ENCODE measurements at regions of chr9 and their contacts with region 1.

Region 1: GRCh38 chr9:92634712-92635605 is 35.0 kb downstream of the IPPK start:
- DNase-seq: peak; percentile 78 to 93 (median 92)
- ATAC-seq: peak; percentile 84 to 86
- H3K4me3 ChIP-seq: no peak overlapping the region
- H3K27ac ChIP-seq: no peak overlapping the region
- H3K4me1 ChIP-seq: no peaks in the 10 kb centered on the region
- H3K27me3 ChIP-seq: no peaks in the 10 kb centered on the region

Region 2: GRCh38 chr9:92133949-92134604 is 500.9 kb before region 1 on chr9:
- intact Hi-C with region 1: loop called in 2 of 4 experiments (anchors 5 to 10 kb)
- DNase-seq: peak; percentile 78 to 91 (median 91)
- ATAC-seq: peak; percentile 74 to 78
- H3K4me3 ChIP-seq: no peak overlapping the region
- H3K27ac ChIP-seq: no peak overlapping the region
- H3K4me1 ChIP-seq: no peaks in the 10 kb centered on the region
- H3K27me3 ChIP-seq: no peaks in the 10 kb centered on the region

Region 3: GRCh38 chr9:92140074-92140753 is 494.7 kb before region 1 on chr9:
- intact Hi-C with region 1: loop called in 2 of 4 experiments (anchors 5 to 10 kb)
- DNase-seq: peak; percentile 74 to 89 (median 88)
- ATAC-seq: peak; percentile 56 to 74
- H3K4me3 ChIP-seq: no peak overlapping the region
- H3K27ac ChIP-seq: no peak overlapping the region
- H3K4me1 ChIP-seq: no peaks in the 10 kb centered on the region
- H3K27me3 ChIP-seq: no peaks in the 10 kb centered on the region

Region 4: GRCh38 chr9:92325269-92325990 is 309.5 kb before region 1 on chr9 and contains the starts of genes CENPP and NOL8:
- intact Hi-C with region 1: loop called in 1 of 4 experiments (anchors 10 kb)
- DNase-seq: peak; percentile 86 to 94 (median 92)
- ATAC-seq: peak; percentile 99
- H3K4me3 ChIP-seq: peak within 1 kb of the TSS; percentile 99
- H3K27ac ChIP-seq: peak within 1 kb of the TSS; percentile 91
- H3K4me1 ChIP-seq: no peaks in the 10 kb centered on the region
- H3K27me3 ChIP-seq: no peaks in the 10 kb centered on the region
- total RNA-seq, gene CENPP: 2.0 to 4.0 (median 3.0) TPM
- total RNA-seq, gene NOL8: 15.7 to 19.0 (median 16.3) TPM

Region 5: DNA sequence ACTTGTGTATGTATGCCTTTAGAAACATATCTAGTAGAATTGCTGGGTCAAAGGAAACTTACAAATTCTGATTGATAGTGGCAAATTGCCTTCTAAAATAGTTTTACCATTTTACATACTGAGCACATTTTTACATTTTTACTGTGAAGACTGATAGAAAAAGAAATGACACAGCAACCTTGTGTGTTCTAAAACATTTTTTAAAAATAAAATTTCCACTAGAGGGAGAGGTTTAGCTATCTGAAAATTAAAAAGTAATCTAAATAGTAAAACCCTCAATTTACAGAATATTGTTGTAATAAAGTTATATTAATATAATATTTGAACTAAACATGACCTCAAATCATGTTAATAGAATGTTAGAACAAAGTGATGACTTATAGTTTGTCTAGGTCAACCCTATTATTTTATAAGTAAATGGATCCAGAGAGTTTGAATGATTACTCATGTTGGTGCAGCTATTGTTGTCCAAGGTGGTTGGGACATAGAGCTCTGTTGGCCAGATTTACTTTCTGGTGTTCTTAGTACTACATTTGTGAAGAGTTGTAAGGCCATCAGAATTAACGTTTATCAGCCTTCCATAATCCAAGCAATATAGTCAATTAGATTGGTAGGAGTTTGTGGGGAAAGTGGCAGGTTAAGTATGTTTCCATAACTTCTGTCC is 292.0 kb before region 1 on chr9:
- intact Hi-C with region 1: loop called in 2 of 4 experiments (anchors 10 kb)
- DNase-seq: no peak
- ATAC-seq: no peak
- H3K4me3 ChIP-seq: no peak overlapping the region
- H3K27ac ChIP-seq: no peak overlapping the region
- H3K4me1 ChIP-seq: no peaks in the 10 kb centered on the region
- H3K27me3 ChIP-seq: no peaks in the 10 kb centered on the region

Region 6: DNA sequence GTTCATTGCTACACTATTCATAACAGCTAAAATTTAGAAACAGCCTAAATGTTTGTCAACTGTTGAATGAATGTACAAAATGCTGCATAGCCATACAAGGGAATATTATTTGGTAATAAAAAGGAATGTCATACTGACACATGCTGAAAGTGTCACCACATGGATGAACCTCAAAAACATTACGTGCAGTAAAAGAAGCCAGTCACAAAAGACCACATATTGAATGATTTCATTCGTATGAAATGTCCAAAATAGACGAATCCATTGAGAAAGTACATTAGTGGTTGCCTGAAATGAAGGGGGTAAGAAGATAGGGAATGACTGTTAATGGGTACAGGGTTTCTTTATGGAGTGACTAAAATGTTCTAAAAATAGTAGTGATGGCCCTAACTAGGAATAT is 87.6 kb before region 1 on chr9:
- intact Hi-C with region 1: no loop called
- DNase-seq: no peak
- ATAC-seq: no peak
- H3K4me3 ChIP-seq: no peak overlapping the region
- H3K27ac ChIP-seq: no peak overlapping the region
- H3K4me1 ChIP-seq: no peaks in the 10 kb centered on the region
- H3K27me3 ChIP-seq: no peaks in the 10 kb centered on the region

Region 7: GRCh38 chr9:92680166-92681119 is 45.5 kb after region 1 on chr9:
- intact Hi-C with region 1: no loop called
- DNase-seq: peak in 1 of 3 donors; percentile 59
- ATAC-seq: peak in 1 of 2 donors; percentile 26
- H3K4me3 ChIP-seq: no peak overlapping the region
- H3K27ac ChIP-seq: no peak overlapping the region
- H3K4me1 ChIP-seq: no peaks in the 10 kb centered on the region
- H3K27me3 ChIP-seq: no peaks in the 10 kb centered on the region

Region 8: GRCh38 chr9:93183609-93184431 is 548.9 kb after region 1 on chr9 and contains the start of gene WNK2:
- intact Hi-C with region 1: no loop called
- DNase-seq: peak in 2 of 3 donors; percentile 71 to 72
- ATAC-seq: peak; percentile 58 to 64
- H3K4me3 ChIP-seq: peak within 1 kb of the TSS; percentile 45
- H3K27ac ChIP-seq: peak within 1 kb of the TSS; percentile 34
- H3K4me1 ChIP-seq: peaks cover 3% of the 10 kb centered on the region
- H3K27me3 ChIP-seq: no peaks in the 10 kb centered on the region
- total RNA-seq, gene WNK2: 217 to 322 (median 278) TPM

Measured in right cardiac atrium (tissue), 5 donors.